Endothelial cell of umbilical vein (primary cell): ENCODE measurements at regions of chr9 and their contacts with region 1.

Region 1: DNA sequence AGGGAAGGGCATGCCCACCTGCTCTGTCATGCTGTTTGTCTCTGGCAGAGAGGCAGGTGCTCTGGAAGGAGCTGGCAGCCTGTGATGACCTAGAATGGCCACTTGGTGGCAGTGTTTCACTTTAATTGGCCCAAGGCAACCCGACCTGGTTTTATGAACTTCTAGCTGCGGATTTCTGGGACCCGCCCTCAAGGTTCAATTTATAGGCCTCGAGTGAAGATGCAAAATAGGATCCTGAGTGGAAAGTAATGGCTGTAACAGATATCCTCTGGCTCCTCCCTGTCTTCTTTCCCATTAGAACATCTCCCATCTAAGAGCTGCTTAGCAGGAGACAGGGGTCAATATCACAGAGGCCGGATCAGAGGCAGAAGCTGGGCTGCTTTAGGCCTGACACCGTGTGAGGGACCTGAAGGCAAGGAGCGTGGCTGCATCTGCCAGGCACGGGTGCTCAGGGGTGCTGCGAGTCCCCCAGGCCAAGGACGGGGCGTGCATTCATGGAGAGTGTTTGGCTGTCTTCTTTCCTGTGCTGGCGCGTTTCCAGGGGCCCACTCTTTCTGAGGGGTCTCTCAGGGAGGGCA is 56.7 kb upstream of the SLC28A3 start:
- DNase-seq: peak; percentile 69
- H3K4me3 ChIP-seq: no peak overlapping the region
- H3K27ac ChIP-seq: no peak overlapping the region
- H3K4me1 ChIP-seq: peaks cover 8% of the 10 kb centered on the region
- H3K27me3 ChIP-seq: no peaks in the 10 kb centered on the region
- CTCF ChIP-seq: peak; percentile 66 to 81
- POLR2A ChIP-seq: no peak

Region 2: GRCh38 chr9:84697509-84698114 is 300.4 kb after region 1 on chr9:
- CTCF ChIA-PET with region 1: interaction called, 11 read pairs
- POLR2A ChIA-PET with region 1: no interaction called
- dilution Hi-C with region 1: no loop called
- intact Hi-C with region 1: loop called (anchors 1 kb)
- DNase-seq: peak; percentile 52
- H3K4me3 ChIP-seq: no peak overlapping the region
- H3K27ac ChIP-seq: no peak overlapping the region
- H3K4me1 ChIP-seq: peaks cover 5% of the 10 kb centered on the region
- H3K27me3 ChIP-seq: peaks cover 0 to 2% of the 10 kb centered on the region in 2 experiments
- CTCF ChIP-seq: peak; percentile 66 to 82
- POLR2A ChIP-seq: no peak

Region 3: GRCh38 chr9:84953797-84954705 is 556.8 kb after region 1 on chr9:
- CTCF ChIA-PET with region 1: interaction called, 15 read pairs
- POLR2A ChIA-PET with region 1: no interaction called
- dilution Hi-C with region 1: no loop called
- intact Hi-C with region 1: loop called (anchors 1 kb)
- DNase-seq: peak; percentile 67
- H3K4me3 ChIP-seq: no peak overlapping the region
- H3K27ac ChIP-seq: no peak overlapping the region
- H3K4me1 ChIP-seq: no peaks in the 10 kb centered on the region
- H3K27me3 ChIP-seq: no peaks in the 10 kb centered on the region
- CTCF ChIP-seq: peak; percentile 95 to 97
- POLR2A ChIP-seq: no peak

Region 4: DNA sequence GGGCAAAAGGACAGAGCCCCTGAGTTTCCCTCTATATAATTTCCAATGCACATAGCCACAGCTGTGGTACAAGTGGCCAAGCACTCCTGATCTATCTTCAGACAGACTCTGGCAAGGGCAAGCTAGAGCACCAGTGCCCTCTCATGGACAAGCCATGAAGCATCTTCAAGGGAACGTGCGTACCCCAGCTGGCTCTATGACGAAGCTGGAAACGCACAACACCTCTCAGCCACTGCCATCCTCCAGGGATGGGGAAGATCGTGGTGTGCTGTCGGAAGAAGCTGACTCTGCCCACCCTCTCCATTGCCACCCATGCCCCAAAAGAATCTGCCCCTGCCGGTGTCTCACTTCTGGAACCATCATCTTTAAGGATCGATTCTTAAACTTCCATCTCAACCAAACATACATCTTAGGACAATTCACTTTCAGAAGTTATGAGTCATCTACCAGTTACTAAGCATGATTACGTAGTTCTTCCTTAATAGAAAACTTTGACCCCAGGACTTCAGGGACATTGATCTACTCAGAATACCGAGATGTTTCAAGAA is 861.7 kb after region 1 on chr9:
- CTCF ChIA-PET with region 1: interaction called, 57 read pairs
- POLR2A ChIA-PET with region 1: no interaction called
- dilution Hi-C with region 1: no loop called
- intact Hi-C with region 1: loop called (anchors 1 kb)
- DNase-seq: peak; percentile 80
- H3K4me3 ChIP-seq: peak overlapping the region in 1 of 3 experiments; percentile 41
- H3K27ac ChIP-seq: peak overlapping the region; percentile 27
- H3K4me1 ChIP-seq: peaks cover 15% of the 10 kb centered on the region
- H3K27me3 ChIP-seq: peaks cover 0 to 4% of the 10 kb centered on the region in 2 experiments
- CTCF ChIP-seq: peak; percentile 69 to 82
- POLR2A ChIP-seq: no peak

Region 5: GRCh38 chr9:85702726-85703289 is 1305.6 kb after region 1 on chr9:
- CTCF ChIA-PET with region 1: interaction called, 10 read pairs
- POLR2A ChIA-PET with region 1: no interaction called
- dilution Hi-C with region 1: no loop called
- intact Hi-C with region 1: no loop called
- DNase-seq: no peak
- H3K4me3 ChIP-seq: no peak overlapping the region
- H3K27ac ChIP-seq: no peak overlapping the region
- H3K4me1 ChIP-seq: no peaks in the 10 kb centered on the region
- H3K27me3 ChIP-seq: no peaks in the 10 kb centered on the region
- CTCF ChIP-seq: no peak
- POLR2A ChIP-seq: no peak